ENCODE measurements at regions of chr5 and their contacts with region 1.

Region 1: DNA sequence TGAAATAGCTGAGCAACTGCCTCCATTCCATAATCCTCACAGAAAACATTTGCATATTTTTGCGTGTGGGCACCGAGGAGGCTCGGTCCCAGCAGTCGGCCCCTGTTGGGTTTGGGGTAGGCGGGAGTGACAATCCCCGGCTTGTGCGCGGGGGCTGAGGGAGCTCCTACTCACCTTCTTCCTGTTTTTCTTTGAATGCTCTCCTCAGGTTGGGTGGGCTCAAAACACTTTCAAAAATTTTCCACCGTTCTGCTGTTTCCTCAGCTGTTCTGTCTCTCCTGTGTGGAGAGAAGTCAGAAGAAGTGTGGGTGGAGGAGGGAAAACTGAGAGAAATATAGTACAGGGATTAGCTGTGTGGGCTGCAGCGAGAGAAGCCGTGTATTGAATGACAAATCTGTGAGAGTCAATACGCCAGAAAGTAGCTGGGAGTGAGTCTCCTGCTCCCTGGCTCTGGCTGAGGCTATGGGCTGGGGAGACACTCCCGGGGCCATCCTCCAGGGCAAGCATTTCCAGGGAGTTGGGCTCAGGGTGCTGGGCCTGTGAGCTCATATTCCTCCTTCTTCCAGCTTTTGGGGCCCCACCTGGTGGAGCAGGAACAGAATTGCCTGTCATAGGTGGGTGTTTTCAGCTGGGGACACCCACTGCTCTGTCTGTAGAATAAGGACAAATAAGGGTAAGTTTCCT is 84.7 kb downstream of the CMYA5 start:
- DNase-seq: peak; percentile 54
- H3K4me3 ChIP-seq: no peak overlapping the region
- H3K27ac ChIP-seq: no peak overlapping the region
- H3K4me1 ChIP-seq: peaks cover 4% of the 10 kb centered on the region
- H3K27me3 ChIP-seq: no peaks in the 10 kb centered on the region
- CTCF ChIP-seq: peak; percentile 58 to 66

Region 2: DNA sequence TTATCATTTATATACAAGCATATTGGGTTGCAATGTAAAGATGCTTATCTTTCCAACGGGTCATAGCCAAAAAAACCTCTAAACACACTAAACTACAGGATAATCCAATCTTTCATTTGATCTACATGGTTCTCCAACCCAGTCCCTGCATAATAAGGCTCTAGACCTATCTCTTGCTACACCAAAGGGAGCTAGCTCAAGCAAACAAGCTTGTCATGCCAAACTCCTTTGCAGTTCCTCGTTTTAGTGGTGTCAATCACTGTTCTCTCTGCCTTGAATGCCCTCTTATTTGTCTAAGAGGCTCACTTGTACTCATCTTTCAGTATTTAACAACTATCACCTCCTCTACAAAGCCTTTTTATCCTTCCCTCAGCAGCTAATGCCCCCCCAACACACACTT is 266.0 kb before region 1 on chr5:
- CTCF ChIA-PET with region 1: no interaction called
- dilution Hi-C with region 1: no loop called
- in situ Hi-C with region 1: no loop called
- intact Hi-C with region 1: no loop called
- DNase-seq: no peak
- H3K4me3 ChIP-seq: no peak overlapping the region
- H3K27ac ChIP-seq: no peak overlapping the region
- H3K4me1 ChIP-seq: peaks cover 22% of the 10 kb centered on the region
- H3K27me3 ChIP-seq: no peaks in the 10 kb centered on the region
- CTCF ChIP-seq: no peak

Region 3: DNA sequence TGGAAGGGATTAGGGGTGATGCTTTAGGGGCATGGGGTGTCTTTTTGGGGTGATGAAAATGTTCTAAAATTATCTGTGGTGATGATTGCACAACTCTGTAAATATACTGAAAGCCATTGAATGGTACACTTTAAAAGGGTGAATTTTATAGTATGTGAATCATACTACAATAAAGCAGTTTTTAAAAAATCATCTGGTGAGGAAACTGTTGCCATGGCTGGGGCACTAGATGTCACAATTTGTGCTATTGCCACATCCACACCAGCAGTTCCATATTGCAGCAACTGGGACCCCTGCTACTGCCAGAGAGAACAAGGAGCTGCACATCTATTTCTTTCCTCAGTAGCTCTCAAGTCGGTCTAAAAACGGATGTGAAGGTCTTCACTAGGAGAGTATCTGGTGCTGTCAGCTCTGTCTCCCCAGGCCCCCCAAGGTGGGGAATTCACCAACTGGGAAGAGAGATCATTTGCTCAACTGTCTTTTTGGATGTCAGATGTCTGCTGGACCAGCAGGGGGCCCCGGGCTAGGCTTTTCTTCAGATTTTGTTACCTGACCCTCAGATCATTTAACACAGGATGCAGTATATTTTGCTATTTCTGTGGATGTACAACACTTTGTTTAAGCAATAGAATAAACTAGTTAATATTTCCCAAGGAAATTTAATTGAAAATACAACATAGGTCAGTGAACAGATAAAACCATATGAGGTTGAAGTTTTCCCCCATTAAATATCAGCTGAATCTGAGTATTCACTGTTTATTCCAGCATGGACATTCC is 71.5 kb before region 1 on chr5:
- CTCF ChIA-PET with region 1: no interaction called
- dilution Hi-C with region 1: no loop called
- in situ Hi-C with region 1: no loop called
- intact Hi-C with region 1: loop called (anchors 5 kb)
- DNase-seq: peak; percentile 56
- H3K4me3 ChIP-seq: no peak overlapping the region
- H3K27ac ChIP-seq: no peak overlapping the region
- H3K4me1 ChIP-seq: peaks cover 10% of the 10 kb centered on the region
- H3K27me3 ChIP-seq: no peaks in the 10 kb centered on the region
- CTCF ChIP-seq: peak; percentile 57 to 60

Region 4: DNA sequence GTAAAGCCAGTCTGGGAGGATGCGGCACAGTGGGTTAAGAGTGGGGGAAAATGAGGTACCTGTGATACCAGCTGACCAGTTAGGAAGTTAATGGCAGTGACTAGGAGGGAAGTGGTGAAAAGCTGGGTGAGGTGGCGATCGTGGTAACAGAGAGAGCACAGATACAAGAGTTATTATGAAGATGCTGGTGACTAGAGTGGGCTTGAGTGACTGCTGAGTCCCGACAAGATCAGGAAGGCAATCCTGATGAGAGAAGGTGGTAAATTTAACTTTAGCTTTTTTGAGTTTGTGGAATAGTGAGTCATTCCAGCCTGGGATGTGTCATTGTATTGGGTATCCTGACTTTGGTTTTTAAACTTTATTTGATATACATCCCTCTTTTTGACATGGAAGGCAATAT is 45.9 kb before region 1 on chr5:
- CTCF ChIA-PET with region 1: no interaction called
- dilution Hi-C with region 1: no loop called
- in situ Hi-C with region 1: no loop called
- intact Hi-C with region 1: no loop called
- DNase-seq: peak; percentile 45
- H3K4me3 ChIP-seq: no peak overlapping the region
- H3K27ac ChIP-seq: peak overlapping the region; percentile 37
- H3K4me1 ChIP-seq: peaks cover 9% of the 10 kb centered on the region
- H3K27me3 ChIP-seq: peaks cover 3% of the 10 kb centered on the region
- CTCF ChIP-seq: no peak

Measured in mammary epithelial cell (primary cell).